Activated CD4-positive, alpha-beta T cell treated with anti-CD3 and anti-CD28 coated beads, Interleukin-2, amount 10 ng/mL, durations not matched to agents 24 days and 14 days (primary cell): ENCODE measurements at regions of chr2 and their contacts with region 1.

Region 1: GRCh38 chr2:113390124-113390849 is 47.2 kb upstream of the ZNG1B start:
- DNase-seq: peak; percentile 88
- H3K4me3 Mint-ChIP-seq: peak overlapping the region; percentile 28
- H3K27ac Mint-ChIP-seq: peak overlapping the region; percentile 13
- H3K4me1 Mint-ChIP-seq: peaks cover 9% of the 10 kb centered on the region
- H3K27me3 Mint-ChIP-seq: peaks cover 30% of the 10 kb centered on the region

Region 2: GRCh38 chr2:112679484-112679883 is 710.8 kb before region 1 on chr2:
- intact Hi-C with region 1: no loop called
- DNase-seq: no peak
- H3K4me3 Mint-ChIP-seq: no peak overlapping the region
- H3K27ac Mint-ChIP-seq: no peak overlapping the region
- H3K4me1 Mint-ChIP-seq: peaks cover 13% of the 10 kb centered on the region
- H3K27me3 Mint-ChIP-seq: peaks cover 2% of the 10 kb centered on the region

Region 3: DNA sequence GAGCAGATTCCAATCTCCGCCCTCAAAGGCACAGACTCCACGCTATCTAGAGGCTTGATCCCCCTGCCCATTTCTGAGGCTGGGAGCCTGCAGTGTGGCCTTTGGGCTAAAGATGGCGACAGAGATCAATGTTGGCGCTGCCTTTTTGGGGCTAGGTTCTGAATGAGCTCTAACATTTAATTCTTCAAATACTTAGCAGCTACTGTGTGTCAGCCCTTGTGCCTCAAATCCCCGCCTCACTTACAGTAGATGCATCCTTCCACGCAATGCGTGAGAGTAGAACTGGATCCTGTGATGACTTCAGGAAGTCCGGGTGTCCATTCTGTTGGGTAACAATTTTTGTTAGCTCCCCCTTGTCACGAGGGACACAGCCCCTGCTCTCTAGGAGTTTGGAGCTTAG is 310.2 kb before region 1 on chr2:
- intact Hi-C with region 1: loop called (anchors 5 kb)
- DNase-seq: peak; percentile 88
- H3K4me3 Mint-ChIP-seq: no peak overlapping the region
- H3K27ac Mint-ChIP-seq: no peak overlapping the region
- H3K4me1 Mint-ChIP-seq: peaks cover 29% of the 10 kb centered on the region
- H3K27me3 Mint-ChIP-seq: peaks cover 15% of the 10 kb centered on the region

Region 4: GRCh38 chr2:113298176-113298575 is 92.1 kb before region 1 on chr2:
- intact Hi-C with region 1: loop called (anchors 5 kb)
- DNase-seq: no peak
- H3K4me3 Mint-ChIP-seq: no peak overlapping the region
- H3K27ac Mint-ChIP-seq: no peak overlapping the region
- H3K4me1 Mint-ChIP-seq: no peaks in the 10 kb centered on the region
- H3K27me3 Mint-ChIP-seq: peaks cover 22% of the 10 kb centered on the region